Ascending aorta (tissue), 2 donors: ENCODE measurements at regions of chr20 and their contacts with region 1.

Region 1: DNA sequence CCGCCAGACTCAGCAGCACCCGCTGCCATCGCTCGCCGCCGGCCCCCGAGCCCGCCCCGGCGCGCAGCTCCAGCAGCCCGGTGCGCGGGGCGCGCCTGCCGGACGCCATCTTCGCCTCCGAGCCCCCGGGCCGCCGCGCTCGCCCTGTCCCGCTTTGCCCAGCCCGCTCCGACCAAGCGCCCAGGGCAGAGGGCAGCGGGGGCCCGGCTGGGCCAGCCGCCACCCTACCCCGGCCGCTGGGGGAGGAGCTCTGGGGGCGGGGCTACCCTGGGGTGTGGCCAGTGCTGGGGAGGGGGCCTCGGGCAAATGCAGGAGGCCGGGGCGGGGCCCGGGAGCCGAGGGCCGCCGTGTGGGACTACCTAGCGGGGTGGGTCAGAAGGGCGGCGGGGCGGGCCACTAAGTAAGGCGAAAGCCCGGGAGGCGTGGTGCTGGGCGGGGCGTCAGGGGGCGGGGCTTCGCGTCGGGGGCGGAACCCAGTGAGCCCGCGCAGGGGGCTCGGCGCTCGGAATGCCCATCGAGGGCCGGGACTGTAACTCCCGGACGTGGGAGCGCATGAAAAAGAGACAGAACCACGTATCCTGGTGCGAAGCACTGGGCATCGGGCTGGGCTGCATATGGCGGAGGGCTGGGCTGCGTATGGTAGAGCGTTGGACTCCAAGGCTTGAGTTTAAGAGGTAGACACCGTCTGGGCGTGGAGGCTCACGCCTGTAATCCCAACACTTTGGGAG is at the start of gene SNTA1:
- DNase-seq: peak; percentile 87 to 97
- H3K4me3 ChIP-seq: peak within 1 kb of the TSS; percentile 78 to 85
- H3K27ac ChIP-seq: peak within 1 kb of the TSS; percentile 85 to 91
- H3K4me1 ChIP-seq: peaks cover 9 to 23% of the 10 kb centered on the region in 2 donors
- H3K27me3 ChIP-seq: no peaks in the 10 kb centered on the region
- CTCF ChIP-seq: no peak
- total RNA-seq, gene SNTA1: 108 TPM

Region 2: DNA sequence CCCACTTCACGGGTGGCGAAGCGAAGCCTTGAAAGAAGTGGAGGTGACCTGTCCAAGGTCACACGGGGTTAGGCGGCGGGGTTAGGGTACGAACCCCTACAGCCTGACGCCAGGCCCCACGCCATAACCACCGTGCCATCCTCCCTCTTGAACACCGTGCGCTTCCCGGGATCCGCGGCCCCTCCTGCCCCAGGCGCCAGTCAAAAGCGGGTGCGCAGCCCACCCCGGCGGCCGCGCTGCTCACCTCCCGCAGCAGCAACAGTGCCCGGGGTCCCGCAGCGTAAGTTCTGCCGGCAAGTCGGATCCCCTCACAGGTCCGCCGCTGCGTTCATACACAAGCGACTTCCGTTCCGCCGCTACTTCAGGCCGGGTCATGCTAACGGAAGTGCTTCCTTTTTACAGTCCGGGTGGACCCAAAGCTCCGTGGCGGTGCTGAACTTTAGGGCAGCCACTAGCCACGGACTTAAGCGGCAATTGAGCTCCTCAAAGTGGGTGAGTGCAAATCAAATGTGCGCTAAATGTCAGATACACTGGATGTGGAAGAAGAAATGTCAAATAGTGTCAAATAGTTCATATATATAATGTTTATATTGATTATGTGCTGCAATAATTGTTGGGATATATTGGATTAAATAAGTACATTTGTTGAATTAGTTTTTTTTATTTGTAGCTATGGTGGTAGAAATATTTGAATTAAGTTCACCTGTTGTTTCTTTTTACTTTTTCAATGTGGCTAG is 42.3 kb before region 1 on chr20 and contains the start of gene CDK5RAP1:
- intact Hi-C with region 1: loop called (anchors 5 kb)
- DNase-seq: peak; percentile 46 to 93
- H3K4me3 ChIP-seq: peak within 1 kb of the TSS; percentile 76 to 94
- H3K27ac ChIP-seq: peak within 1 kb of the TSS; percentile 56 to 61
- H3K4me1 ChIP-seq: peaks cover 6 to 17% of the 10 kb centered on the region in 2 donors
- H3K27me3 ChIP-seq: no peaks in the 10 kb centered on the region
- CTCF ChIP-seq: no peak
- total RNA-seq, gene CDK5RAP1: 42.8 TPM

Region 3: DNA sequence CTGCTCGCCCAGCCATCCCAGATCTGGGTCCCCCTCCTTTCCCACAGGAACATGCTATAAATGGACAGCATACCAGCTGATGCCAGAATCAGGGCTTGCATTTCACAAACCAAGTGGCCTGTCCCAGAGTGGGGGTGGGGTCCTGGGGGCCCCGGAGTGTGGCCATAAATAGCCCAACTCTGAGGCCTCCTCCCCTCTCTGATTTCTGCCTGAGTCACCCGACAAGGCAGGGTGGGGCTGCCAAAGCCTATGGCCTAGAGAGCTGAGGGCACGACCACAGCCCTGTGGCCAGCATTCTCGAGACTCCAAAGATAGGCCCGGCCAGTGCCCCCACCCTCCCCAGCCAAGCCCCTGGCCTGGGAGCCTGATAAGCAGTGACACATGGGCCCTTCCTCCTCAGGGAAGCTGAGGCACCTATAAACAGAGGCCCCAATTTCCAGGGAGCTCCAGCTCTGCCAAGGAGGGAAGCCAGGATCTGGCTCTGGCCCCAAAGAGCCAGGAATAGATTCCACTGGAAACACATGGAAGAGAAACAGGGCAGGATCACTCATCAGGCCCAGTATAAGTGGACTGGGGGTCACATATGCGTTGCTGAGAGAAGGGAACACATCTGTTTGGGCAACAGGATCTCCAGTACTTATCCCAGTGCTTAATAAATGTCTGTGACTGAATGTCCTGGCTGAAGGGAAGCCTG is 20.4 kb before region 1 on chr20:
- intact Hi-C with region 1: loop called (anchors 1 kb)
- DNase-seq: peak; percentile 75 to 95
- H3K4me3 ChIP-seq: no peak overlapping the region
- H3K27ac ChIP-seq: peak overlapping the region; percentile 89 to 91
- H3K4me1 ChIP-seq: peaks cover 11 to 32% of the 10 kb centered on the region in 2 donors
- H3K27me3 ChIP-seq: no peaks in the 10 kb centered on the region
- CTCF ChIP-seq: no peak

Region 4: DNA sequence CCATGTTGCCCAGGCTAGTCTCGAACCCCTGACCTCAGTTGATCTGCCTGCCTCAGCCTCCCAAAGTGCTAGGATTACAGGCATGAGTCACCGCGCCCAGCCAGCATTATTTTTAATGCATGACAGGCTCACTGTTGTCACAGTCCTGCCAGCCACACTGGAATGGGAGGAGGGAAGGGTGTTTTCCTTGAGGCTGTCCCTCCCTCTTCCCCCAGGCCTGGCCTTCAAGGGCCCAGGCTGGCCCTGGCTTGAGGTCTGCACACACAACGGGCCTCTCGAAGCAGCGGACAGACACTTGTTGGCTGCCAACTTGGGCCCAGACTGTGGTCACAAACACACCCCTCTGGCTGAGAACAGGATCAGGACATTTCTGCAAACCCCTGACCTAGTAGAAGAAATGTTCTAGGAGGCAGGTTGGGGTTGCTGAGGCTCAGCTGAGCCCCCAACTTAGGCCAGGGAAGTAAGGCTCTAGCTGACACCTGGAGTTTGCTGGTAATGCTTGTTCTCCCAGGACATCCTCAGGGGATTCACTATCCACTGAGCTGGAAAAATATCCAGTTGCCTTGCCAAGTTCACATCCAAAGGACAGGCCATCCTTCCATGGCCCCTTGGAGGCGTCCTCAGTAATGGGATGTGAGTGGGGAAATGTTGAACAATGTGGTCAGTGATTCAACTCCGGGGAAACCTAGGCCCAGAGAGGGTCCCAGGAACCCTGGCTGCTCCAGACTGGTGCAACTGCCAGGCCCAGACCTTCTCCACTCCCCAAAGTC is 10.0 kb before region 1 on chr20:
- intact Hi-C with region 1: no loop called
- DNase-seq: peak; percentile 66 to 93
- H3K4me3 ChIP-seq: no peak overlapping the region
- H3K27ac ChIP-seq: peak overlapping the region; percentile 85 to 86
- H3K4me1 ChIP-seq: peaks cover 23 to 35% of the 10 kb centered on the region in 2 donors
- H3K27me3 ChIP-seq: no peaks in the 10 kb centered on the region
- CTCF ChIP-seq: no peak

Region 5: GRCh38 chr20:33576432-33577125 is 132.9 kb after region 1 on chr20:
- intact Hi-C with region 1: no loop called
- DNase-seq: no peak
- H3K4me3 ChIP-seq: no peak overlapping the region
- H3K27ac ChIP-seq: no peak overlapping the region
- H3K4me1 ChIP-seq: peaks cover 0 to 2% of the 10 kb centered on the region in 2 donors
- H3K27me3 ChIP-seq: no peaks in the 10 kb centered on the region
- CTCF ChIP-seq: no peak

Region 6: GRCh38 chr20:33666293-33667244 is 222.9 kb after region 1 on chr20 and contains the start of gene ACTL10:
- intact Hi-C with region 1: loop called (anchors 5 kb)
- DNase-seq: peak; percentile 95 to 99
- H3K4me3 ChIP-seq: peak within 1 kb of the TSS; percentile 65 to 70
- H3K27ac ChIP-seq: peak within 1 kb of the TSS; percentile 88 to 93
- H3K4me1 ChIP-seq: peaks cover 9 to 40% of the 10 kb centered on the region in 2 donors
- H3K27me3 ChIP-seq: no peaks in the 10 kb centered on the region
- CTCF ChIP-seq: peak in 2 of 3 experiments; percentile 43 to 44
- total RNA-seq, gene ACTL10: 26.3 TPM

Region 7: DNA sequence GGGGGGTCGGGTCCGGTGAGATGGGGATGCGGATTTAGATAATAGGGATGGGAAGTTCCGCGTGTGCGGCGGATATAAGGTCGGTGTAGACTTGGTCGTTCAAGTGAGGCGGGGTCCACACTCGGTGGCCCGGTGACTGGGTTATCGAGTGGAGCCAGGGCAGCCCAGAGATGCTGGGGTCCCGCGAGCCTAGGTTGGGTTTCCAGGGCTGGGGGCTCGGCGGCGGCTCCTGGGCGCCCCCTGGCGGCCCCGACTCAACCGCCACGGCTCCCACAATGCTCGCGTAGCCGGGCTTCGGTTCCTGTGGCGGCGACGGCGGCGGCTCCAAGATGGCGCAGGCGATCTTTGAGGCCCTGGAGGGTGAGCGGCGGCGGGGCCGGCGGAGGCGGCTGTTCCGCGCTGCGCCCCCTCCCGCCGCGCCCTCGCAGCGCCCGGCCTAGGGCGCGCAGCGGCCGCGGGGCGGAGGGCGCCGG is 288.1 kb after region 1 on chr20 and contains the start of gene ZNF341:
- intact Hi-C with region 1: no loop called
- DNase-seq: peak; percentile 29 to 92
- H3K4me3 ChIP-seq: peak within 1 kb of the TSS; percentile 73 to 81
- H3K27ac ChIP-seq: peak within 1 kb of the TSS; percentile 74 to 84
- H3K4me1 ChIP-seq: peaks cover 0 to 9% of the 10 kb centered on the region in 2 donors
- H3K27me3 ChIP-seq: no peaks in the 10 kb centered on the region
- CTCF ChIP-seq: peak; percentile 91
- total RNA-seq, gene ZNF341: 4.5 TPM

Region 8: DNA sequence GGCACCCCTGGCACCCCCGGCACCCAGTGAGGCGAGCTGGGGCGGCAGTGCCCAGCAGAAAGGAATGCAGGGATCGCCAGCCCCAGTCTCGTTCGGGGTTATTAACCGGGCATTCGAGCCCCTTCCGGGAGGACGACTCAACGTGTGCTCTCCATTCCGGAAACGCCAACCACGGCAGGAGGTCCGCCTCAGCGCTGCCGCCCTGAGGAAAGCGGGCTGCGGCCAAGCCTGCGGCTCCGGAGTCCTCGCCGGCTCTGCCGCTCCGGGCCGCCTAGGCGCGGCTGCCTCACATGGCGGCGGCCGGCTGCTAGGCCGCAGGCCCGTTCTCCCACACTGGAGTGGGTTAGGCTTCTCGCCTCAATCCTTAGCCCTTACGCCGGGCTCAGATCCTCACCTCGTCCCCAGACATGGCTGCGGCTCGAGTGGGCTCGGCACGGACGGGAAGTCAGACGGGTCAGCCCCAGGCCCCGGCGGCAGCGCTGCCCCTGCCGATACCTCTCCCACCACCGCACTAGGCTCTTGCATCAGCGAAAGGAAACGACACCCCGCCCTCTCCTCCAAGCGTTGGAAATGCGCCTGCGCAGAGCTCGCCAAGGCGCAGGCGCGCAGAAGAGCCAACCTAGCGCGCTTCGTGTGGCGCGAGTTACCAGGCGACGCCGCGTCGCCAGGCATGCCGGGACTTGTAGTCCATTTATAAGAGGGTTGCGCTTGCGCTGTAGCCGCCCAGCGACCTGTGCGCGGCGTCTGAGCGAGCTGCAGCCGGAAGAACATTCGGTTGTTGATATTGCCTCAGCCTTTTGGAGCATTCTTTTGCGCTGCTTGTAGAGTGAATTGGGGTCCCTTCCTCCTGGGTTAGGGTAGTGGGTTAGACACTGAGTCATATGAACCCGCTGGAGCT is 668.3 kb after region 1 on chr20 and contains the start of gene EIF2S2:
- intact Hi-C with region 1: loop called (anchors 10 kb)
- DNase-seq: peak; percentile 87 to 97
- H3K4me3 ChIP-seq: peak within 1 kb of the TSS; percentile 79 to 95
- H3K27ac ChIP-seq: peak within 1 kb of the TSS; percentile 94 to 99
- H3K4me1 ChIP-seq: peaks cover 0 to 23% of the 10 kb centered on the region in 2 donors
- H3K27me3 ChIP-seq: no peaks in the 10 kb centered on the region
- CTCF ChIP-seq: no peak
- total RNA-seq, gene EIF2S2: 19.3 TPM